Sciatic nerve (tissue), 2 donors: ENCODE measurements at regions of chr2 and their contacts with region 1.

Region 1: GRCh38 chr2:219294356-219295351 is 14.5 kb downstream of the PTPRN start:
- DNase-seq: peak; percentile 94
- ATAC-seq: peak; percentile 83

Region 2: DNA sequence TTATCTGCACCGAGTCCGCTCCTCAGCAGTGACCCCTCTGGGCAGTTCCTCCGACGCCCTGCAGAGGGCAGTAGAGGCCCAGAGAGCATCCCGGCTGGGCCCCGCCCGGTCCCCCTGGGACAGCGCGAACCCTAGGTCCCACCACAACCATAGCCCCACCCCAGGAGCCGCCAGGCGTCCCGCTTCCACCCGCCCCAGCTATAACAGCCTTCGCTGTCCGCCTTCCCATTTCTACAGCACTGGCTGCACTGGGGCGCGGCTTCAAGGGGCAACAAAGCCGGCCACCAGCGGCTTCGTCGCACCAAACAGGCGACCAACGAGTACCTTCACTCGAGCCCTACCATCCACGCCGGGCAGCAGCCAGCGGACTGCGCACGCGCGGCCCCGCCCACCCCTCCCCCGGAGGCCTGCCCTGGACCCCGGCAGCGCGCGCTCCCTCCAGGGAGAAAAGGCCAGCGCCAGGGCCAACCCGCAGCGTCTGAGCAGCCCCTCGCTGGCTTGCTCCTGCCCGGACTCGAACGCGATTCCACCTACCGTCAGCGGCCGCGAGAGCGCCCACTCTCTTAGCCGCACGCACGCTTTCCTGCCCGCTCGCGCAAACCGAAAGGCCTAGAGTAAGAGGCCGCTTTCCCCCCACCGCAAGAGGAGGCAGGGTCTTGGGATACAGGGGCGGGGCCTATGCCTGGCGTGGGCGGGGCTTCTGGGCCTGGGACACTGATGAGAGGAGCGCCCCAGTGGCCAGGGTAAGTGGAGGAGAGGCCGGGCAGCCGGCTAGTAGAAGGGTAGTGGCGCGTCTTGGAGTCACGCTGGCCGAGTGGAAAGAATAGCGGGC is 134.3 kb before region 1 on chr2 and contains the start of gene NHEJ1:
- intact Hi-C with region 1: loop called (anchors 5 kb)
- DNase-seq: peak; percentile 99
- ATAC-seq: peak; percentile 98
- total RNA-seq, gene NHEJ1: 15.0 TPM

Region 3: DNA sequence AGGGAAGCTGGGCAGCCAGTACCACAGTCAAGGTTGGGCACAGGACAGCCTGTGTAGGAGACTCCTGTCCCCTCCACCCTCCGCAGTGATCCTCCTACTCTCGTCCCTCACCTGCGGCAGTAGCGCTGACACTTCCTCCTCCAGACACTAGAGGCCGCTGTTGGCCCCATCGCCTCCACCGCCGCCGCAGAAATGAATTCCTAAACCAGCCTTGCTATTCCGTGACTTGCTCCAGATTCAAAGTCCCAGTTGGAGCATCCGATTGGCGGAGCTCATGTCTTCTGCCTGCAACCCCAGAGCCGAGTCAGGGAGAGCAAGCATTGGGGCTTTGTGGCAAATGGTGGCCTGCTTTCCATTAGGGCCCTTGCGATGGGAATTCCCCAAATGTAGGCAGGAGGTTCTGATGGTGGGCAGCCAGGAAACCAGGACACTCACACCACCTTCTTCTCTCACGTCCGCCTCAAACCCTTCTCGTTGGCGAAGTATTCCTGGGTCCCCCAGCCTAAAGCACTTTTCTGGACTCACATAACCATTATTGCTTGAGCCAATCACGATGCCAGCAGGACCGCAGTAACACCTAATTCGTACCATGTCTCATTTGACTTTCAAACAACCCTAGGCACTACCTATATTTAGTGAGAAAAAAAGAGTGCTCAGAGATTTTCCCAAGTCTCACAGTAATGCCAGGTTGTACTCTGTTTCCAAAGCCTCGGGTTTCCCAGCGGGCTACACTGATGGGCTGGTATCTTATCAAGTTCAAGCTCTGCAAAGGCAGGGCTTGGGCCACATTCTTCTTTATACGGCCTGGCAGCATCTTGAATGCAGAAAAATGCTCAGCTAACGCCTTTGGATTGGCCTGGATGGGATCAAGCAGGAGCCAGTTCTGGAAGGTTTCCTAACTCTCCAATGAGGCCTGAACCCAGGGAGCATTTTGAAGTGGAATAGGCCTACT is 16.7 kb before region 1 on chr2:
- intact Hi-C with region 1: loop called (anchors 2 kb)
- DNase-seq: peak; percentile 89
- ATAC-seq: peak; percentile 39